AG04449 (cell line): ENCODE measurements at regions of chr12 and their contacts with region 1.

Region 1: DNA sequence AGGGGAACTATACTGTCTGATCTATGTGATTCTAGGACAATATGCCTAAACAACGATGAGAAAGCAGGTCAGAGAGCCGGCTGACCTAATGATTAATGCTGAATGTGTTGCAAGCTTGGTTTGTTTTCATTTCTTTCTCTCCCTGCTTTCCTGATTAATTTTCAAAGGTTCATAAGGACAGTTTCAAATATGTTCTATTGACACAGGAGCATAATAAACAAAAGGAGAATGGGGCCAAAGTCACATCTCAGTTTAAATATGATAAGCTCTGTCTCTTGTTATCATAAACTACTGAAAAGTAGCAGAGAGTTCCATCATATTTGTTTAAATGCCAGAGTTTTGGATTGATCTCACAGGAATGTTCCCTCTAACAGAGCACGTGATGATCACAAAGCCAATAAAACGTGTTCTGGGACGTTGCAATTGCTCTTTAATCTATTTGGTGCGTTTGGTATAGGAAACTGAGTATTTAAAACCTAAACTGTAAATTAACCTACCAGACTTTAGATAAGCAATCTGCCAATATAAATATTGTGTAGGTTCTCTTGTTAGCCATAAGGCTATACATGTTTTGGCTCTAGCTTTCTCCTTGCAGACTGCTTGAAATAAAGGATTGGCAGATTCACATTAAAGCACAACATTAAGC is 3.7 kb upstream of the HSD17B6 start:
- DNase-seq: no peak
- H3K4me3 ChIP-seq: no peak overlapping the region
- CTCF ChIP-seq: no peak

Region 2: GRCh38 chr12:56996793-56997545 is 237.6 kb after region 1 on chr12:
- CTCF ChIA-PET with region 1: interaction called, 276 read pairs
- POLR2A ChIA-PET with region 1: no interaction called
- DNase-seq: no peak
- H3K4me3 ChIP-seq: no peak overlapping the region
- CTCF ChIP-seq: no peak